Left ventricle myocardium inferior (tissue), 1 donor: ENCODE measurements at regions of chr16 and their contacts with region 1.

Region 1: GRCh38 chr16:1863681-1864460 is 8.1 kb downstream of the MEIOB start:
- DNase-seq: no peak
- H3K4me3 ChIP-seq: no peak overlapping the region
- H3K27ac ChIP-seq: no peak overlapping the region
- H3K4me1 ChIP-seq: no peaks in the 10 kb centered on the region
- H3K27me3 ChIP-seq: peaks cover 60% of the 10 kb centered on the region
- CTCF ChIP-seq: peak; percentile 66

Region 2: GRCh38 chr16:1610276-1611017 is 253.4 kb before region 1 on chr16:
- intact Hi-C with region 1: no loop called
- DNase-seq: peak; percentile 88
- H3K4me3 ChIP-seq: peak overlapping the region; percentile 96
- H3K27ac ChIP-seq: peak overlapping the region; percentile 88
- H3K4me1 ChIP-seq: peaks cover 50% of the 10 kb centered on the region
- H3K27me3 ChIP-seq: no peaks in the 10 kb centered on the region
- CTCF ChIP-seq: no peak

Region 3: DNA sequence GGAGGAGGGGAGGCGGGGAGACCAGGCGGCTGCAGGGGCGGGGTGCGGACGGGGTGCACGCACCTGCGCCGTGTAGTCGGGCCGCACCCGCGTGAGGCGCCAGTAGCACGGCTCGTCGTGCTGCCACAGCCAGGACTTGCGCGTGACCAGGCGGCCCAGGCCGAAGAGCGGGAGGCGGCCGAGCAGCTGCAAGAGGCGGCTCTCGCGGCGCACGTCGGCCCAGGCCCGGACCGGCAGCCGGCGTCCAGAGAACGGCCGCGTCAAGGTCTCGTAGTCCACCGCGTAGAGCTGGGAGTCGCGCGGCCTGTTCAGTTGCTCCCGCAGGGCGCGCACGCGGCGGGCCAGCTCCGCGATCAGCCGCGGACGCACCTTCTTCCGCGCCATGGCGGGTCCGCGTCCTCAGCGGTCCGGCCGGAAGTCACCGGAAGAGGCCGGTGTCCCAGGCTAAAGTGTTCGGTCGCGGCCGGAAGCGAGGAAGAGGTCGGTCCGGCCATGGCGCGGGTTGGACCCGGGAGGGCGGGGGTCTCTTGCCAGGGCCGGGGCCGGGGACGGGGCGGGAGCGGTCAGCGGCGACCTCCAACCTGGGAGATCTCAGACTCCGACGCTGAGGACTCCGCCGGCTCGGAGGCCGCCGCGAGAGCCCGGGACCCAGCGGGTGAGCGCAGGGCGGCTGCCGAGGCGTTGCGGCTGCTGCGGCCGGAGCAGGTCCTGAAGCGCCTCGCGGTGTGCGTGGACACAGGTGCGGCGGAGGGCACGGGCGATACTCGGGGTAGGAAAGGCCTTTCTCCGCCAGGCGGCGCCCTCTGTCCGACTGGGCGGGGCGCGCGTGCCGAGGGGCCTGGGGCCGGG is 90.9 kb before region 1 on chr16 and contains the starts of genes EME2 and MRPS34:
- intact Hi-C with region 1: no loop called
- DNase-seq: peak; percentile 86
- H3K4me3 ChIP-seq: peak within 1 kb of the TSS; percentile 92
- H3K27ac ChIP-seq: peak within 1 kb of the TSS; percentile 95
- H3K4me1 ChIP-seq: peaks cover 65% of the 10 kb centered on the region
- H3K27me3 ChIP-seq: no peaks in the 10 kb centered on the region
- CTCF ChIP-seq: peak; percentile 79
- total RNA-seq, gene EME2: 7.4 TPM
- total RNA-seq, gene MRPS34: 78.0 TPM

Region 4: DNA sequence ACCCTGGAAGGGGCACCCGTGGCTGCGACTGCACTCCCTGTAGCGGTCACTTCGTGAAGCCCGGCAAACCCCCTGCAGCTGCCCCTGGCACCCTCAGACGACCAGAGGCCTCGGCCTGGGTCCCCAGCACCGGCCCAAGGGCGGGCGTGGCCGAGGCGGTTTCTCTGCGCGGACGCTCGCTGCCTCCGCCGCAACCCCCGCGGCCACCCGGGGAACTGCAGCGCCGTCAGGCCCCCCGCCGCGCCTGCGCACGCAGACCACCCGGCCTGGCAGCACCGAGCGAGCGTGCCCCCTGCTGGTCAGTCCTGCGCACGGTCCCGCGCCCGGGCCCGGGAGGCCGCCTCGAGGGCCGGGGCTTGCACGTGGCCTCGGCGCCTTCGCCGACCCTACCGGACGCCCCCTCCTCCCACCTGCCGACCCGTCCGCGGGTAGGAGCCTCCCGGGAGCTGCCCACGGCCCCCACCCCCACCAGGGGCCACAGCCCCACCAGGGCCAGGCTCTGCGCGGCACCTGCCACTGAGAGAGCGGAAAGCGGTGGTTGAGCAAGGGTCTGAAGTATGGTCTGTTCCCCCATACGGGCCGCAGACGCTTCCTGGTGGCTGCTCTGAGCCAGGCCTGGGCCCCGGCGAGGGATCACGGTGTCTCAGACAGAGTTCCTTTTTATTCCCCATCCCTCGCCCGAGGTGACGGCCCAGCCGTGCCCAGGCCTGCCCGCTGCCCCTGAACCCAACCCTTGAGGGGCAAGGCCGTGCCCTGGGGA is 65.9 kb after region 1 on chr16:
- intact Hi-C with region 1: loop called (anchors 10 kb)
- DNase-seq: peak; percentile 93
- H3K4me3 ChIP-seq: peak overlapping the region; percentile 76
- H3K27ac ChIP-seq: peak overlapping the region; percentile 85
- H3K4me1 ChIP-seq: peaks cover 13% of the 10 kb centered on the region
- H3K27me3 ChIP-seq: peaks cover 14% of the 10 kb centered on the region
- CTCF ChIP-seq: peak; percentile 98

Region 5: GRCh38 chr16:2236337-2237101 is 372.6 kb after region 1 on chr16 and contains the start of gene DNASE1L2:
- intact Hi-C with region 1: no loop called
- DNase-seq: no peak
- H3K4me3 ChIP-seq: peak within 1 kb of the TSS; percentile 55
- H3K27ac ChIP-seq: no peak within 1 kb of the TSS
- H3K4me1 ChIP-seq: peaks cover 25% of the 10 kb centered on the region
- H3K27me3 ChIP-seq: peaks cover 23% of the 10 kb centered on the region
- CTCF ChIP-seq: no peak
- total RNA-seq, gene DNASE1L2: 0.47 TPM